ENCODE measurements at regions of chr7 and their contacts with region 1.

Region 1: DNA sequence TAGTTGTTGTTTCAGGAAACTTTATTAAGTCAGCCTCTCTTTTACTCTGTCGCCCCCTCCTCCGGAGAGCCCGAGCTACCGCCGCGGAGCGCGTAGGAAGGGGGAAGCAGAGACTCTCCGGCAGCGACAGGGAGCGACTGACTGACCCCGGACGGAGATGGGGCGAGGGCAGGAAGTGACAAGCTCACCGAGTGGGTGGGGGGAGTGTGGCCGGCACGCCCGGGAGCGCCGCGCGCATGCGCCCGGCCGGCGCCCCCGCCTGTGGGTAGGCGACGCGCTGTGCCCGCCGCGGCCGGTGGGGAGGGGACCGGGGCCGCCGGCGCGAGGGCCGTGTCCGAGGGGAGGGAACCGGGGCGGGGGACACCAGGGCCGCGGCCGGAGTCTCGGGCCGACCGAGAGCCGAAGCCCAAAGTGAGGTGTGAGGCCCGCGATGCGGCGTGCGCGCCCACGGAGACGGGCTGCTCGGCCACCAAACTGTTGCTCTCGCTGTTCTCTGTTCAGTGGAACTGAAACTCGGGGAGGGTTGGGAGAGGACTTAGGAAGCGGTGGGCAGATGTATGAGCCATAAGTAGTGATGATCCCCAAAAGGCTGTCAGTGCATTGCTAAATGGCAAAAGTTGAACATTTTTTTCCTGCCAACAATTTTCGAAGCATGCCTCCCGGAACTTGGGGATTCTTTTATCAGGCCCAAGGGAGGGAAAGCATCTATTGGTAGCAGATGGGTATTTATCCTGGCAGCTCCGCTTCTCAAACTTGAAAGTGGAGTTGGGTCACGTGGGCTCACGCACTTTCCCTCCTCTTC is at the start of gene ZNF800:
- DNase-seq: peak; percentile 88 to 90
- ATAC-seq: peak; percentile 95 to 96
- H3K4me3 ChIP-seq: peak within 1 kb of the TSS; percentile 85 to 97 (median 90)
- H3K27ac ChIP-seq: peak within 1 kb of the TSS; percentile 89 to 97 (median 94)
- H3K4me1 ChIP-seq: peaks cover 19 to 25% of the 10 kb centered on the region in 2 donors
- H3K27me3 ChIP-seq: no peaks in the 10 kb centered on the region
- CTCF ChIP-seq: peak in 1 of 5 experiments; percentile 13
- POLR2A ChIP-seq: peak; percentile 92 to 93
- total RNA-seq, gene ZNF800: 22.1 to 41.3 (median 30.1) TPM

Region 2: DNA sequence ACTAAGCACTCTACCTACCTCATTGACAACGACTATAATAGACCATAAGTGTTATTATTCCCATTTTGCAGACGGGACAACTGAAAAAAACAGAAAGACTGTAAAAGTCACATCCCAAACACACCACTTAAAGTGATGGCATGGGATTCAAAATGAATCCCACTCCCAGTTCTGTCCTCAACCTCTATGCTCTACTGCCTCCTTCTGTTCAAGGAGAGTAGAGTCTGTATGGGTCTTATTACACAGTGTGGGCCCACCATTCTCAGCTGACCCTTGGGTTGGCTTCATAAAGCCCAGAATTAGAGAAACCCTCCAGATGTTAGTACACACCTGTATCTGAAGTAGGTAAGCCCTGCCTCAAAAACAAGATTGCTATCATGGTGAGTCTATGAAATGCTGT is 242.2 kb before region 1 on chr7:
- in situ Hi-C with region 1: no loop called
- intact Hi-C with region 1: no loop called
- DNase-seq: no peak
- ATAC-seq: no peak
- H3K4me3 ChIP-seq: no peak overlapping the region
- H3K27ac ChIP-seq: no peak overlapping the region
- H3K4me1 ChIP-seq: no peaks in the 10 kb centered on the region
- H3K27me3 ChIP-seq: no peaks in the 10 kb centered on the region
- CTCF ChIP-seq: no peak
- POLR2A ChIP-seq: no peak

Region 3: DNA sequence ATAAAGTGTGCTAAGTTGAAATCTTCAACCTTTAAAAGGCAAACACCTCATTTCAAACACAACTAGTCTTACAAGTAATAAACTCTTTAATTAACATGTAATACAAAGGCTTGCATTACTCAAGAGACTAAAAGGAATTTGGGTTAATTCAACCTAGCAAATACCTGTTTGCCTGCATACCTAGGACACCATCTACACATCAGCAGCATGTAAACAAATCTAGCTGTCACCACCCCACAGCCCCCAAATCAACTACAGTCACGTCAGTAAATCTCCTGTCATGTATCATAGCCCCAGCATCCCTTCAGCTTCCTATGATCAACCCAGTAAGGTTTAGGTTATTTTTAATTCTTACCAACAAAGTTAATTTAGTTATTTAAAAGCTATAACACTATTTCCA is 33.8 kb before region 1 on chr7:
- in situ Hi-C with region 1: no loop called
- intact Hi-C with region 1: no loop called
- DNase-seq: no peak
- ATAC-seq: no peak
- H3K4me3 ChIP-seq: no peak overlapping the region
- H3K27ac ChIP-seq: no peak overlapping the region
- H3K4me1 ChIP-seq: no peaks in the 10 kb centered on the region
- H3K27me3 ChIP-seq: no peaks in the 10 kb centered on the region
- CTCF ChIP-seq: no peak
- POLR2A ChIP-seq: no peak

Region 4: DNA sequence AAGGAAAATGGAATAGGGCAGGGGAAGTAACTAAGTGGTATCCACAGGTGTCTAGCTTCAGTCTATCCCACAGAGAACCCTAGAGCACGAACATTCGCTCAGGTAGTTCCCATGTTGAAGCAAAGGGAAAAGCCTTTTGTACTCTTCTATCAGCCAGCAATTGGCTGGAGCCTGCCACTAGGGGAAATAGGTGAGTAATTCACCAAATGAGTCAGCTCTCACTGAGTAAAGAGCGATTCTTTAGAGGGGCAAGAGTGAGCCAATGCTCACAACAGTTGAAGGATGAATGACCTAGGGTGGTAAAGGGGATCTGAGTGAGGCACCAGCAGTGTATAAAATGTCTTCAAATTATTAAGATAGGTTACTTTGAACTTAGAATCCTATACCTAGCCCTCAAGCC is 93.9 kb after region 1 on chr7:
- in situ Hi-C with region 1: no loop called
- intact Hi-C with region 1: no loop called
- DNase-seq: no peak
- ATAC-seq: no peak
- H3K4me3 ChIP-seq: no peak overlapping the region
- H3K27ac ChIP-seq: no peak overlapping the region
- H3K4me1 ChIP-seq: no peaks in the 10 kb centered on the region
- H3K27me3 ChIP-seq: no peaks in the 10 kb centered on the region
- CTCF ChIP-seq: no peak
- POLR2A ChIP-seq: no peak

Region 5: DNA sequence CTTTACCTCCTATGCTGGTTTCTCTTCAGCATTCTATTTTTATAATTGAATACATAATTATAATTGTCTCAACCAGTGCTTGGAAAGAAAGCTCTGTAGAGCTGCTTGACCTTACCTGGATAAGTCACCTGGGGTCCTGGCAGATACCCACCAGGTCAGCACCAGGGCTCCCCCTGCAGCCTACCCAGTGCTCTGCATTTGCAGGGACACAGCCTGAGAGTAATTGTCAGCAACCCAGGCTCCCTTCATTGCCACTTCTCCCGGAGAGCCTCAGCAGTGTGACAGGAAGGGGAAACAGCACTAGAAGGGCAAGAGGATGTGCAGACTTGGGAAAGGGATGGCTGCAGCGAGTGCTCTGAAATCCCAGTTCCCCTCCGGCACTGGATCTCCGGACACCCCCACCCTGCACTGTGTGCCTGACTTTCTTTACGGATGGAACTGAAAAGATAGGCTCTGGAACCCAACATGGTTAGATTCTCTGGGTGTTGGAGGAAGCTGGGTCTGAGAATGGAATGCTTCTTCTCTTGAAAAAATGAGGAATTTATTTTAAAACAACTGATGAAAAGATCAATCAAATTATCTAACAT is 236.6 kb after region 1 on chr7:
- in situ Hi-C with region 1: no loop called
- intact Hi-C with region 1: no loop called
- DNase-seq: no peak
- ATAC-seq: no peak
- H3K4me3 ChIP-seq: no peak overlapping the region
- H3K27ac ChIP-seq: no peak overlapping the region
- H3K4me1 ChIP-seq: no peaks in the 10 kb centered on the region
- H3K27me3 ChIP-seq: no peaks in the 10 kb centered on the region
- CTCF ChIP-seq: no peak
- POLR2A ChIP-seq: no peak

Region 6: DNA sequence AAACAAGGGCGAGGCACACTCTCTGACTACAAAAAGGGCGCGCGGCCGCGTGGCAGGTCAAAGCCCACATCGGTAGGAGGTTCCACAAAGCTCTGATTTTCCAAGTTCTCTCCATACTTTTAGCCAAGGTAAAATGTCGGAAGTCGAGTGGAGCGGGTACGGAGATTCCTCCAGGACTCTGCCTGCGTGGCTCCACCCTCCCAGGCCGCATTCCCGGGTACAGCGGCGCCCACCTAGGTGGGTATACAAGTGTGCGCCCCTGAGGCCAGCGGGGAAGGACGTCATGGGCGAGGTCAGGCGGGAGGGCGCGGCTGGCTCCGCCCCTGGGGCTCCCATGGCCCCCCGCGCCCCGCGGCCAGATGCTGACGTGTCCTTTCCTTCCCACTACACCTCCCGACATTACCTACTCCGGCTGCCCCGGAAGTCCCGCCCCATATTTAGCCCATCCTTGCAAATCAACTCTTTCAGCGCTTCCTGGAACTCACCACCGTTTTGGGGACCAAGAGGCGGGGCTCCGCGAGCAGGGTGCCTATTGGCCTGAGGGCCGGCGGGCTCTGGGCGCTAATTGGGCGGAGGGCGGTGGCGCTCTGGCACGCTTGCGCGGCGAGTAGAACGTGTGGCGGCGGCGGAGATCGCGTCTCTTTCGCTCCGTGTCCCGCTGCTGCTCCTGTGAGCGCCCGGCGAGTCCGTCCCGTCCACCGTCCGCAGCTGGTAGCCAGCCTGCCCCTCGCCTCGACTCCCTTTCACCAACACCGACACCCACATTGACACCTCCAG is 259.0 kb after region 1 on chr7 and contains the start of gene SND1:
- in situ Hi-C with region 1: loop called in 1 of 4 experiments (anchors 25 kb)
- intact Hi-C with region 1: loop called (anchors 2 kb)
- DNase-seq: peak; percentile 98 to 100
- ATAC-seq: peak; percentile 98
- H3K4me3 ChIP-seq: peak within 1 kb of the TSS; percentile 78 to 90 (median 90)
- H3K27ac ChIP-seq: peak within 1 kb of the TSS; percentile 92 to 99 (median 93)
- H3K4me1 ChIP-seq: peaks cover 23 to 29% of the 10 kb centered on the region in 2 donors
- H3K27me3 ChIP-seq: no peaks in the 10 kb centered on the region
- CTCF ChIP-seq: peak in 2 of 5 experiments; percentile 7 to 10
- POLR2A ChIP-seq: peak; percentile 82 to 87
- total RNA-seq, gene SND1: 30.4 to 73.0 (median 50.3) TPM

Measured in gastrocnemius medialis (tissue), 4 donors.